Dendritic cell treated with granulocyte-macrophage colony-stimulating factor and Interleukin-4, amounts not matched to agents 40 ng/mL and 50 ng/mL, for 4 days (primary cell): ENCODE measurements at regions of chr7 and their contacts with region 1.

Region 1: GRCh38 chr7:135509903-135510602 is at the start of gene CNOT4:
- H3K4me3 Mint-ChIP-seq: no peak within 1 kb of the TSS
- H3K27ac Mint-ChIP-seq: no peak within 1 kb of the TSS
- H3K4me1 Mint-ChIP-seq: peaks cover 4% of the 10 kb centered on the region
- H3K27me3 Mint-ChIP-seq: no peaks in the 10 kb centered on the region

Region 2: GRCh38 chr7:135281363-135281949 is 228.6 kb before region 1 on chr7:
- intact Hi-C with region 1: loop called (anchors 2 kb)
- H3K4me3 Mint-ChIP-seq: no peak overlapping the region
- H3K27ac Mint-ChIP-seq: no peak overlapping the region
- H3K4me1 Mint-ChIP-seq: peaks cover 7% of the 10 kb centered on the region
- H3K27me3 Mint-ChIP-seq: peaks cover 17% of the 10 kb centered on the region

Region 3: DNA sequence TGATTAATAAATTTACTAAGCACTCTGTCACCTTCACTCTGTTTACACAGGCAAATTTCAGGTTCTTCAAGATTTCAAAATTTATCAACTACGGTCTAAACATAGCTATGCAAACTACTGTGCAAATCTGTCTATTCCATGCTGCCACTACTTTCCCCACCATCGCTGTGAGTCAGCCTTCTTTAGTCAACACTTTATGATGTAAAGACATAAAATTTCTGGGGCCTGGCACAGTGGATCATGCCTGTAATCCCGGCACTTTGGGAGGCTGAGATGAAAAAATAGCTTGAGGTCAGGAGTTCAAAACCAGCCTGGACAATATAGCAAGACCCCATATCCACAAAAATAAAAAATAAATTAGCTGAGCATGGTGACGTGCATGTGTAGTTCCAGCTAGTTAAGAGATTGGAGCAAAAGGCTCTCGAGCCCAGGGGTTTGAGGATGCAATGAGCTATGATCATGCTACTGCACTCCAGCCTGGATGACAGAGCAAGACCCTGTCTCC is 42.8 kb before region 1 on chr7:
- intact Hi-C with region 1: loop called (anchors 5 kb)
- H3K4me3 Mint-ChIP-seq: no peak overlapping the region
- H3K27ac Mint-ChIP-seq: no peak overlapping the region
- H3K4me1 Mint-ChIP-seq: peaks cover 6% of the 10 kb centered on the region
- H3K27me3 Mint-ChIP-seq: no peaks in the 10 kb centered on the region

Region 4: GRCh38 chr7:135558337-135558767 is 48.3 kb after region 1 on chr7:
- intact Hi-C with region 1: loop called (anchors 1 kb)
- H3K4me3 Mint-ChIP-seq: no peak overlapping the region
- H3K27ac Mint-ChIP-seq: no peak overlapping the region
- H3K4me1 Mint-ChIP-seq: peaks cover 29% of the 10 kb centered on the region
- H3K27me3 Mint-ChIP-seq: no peaks in the 10 kb centered on the region

Region 5: DNA sequence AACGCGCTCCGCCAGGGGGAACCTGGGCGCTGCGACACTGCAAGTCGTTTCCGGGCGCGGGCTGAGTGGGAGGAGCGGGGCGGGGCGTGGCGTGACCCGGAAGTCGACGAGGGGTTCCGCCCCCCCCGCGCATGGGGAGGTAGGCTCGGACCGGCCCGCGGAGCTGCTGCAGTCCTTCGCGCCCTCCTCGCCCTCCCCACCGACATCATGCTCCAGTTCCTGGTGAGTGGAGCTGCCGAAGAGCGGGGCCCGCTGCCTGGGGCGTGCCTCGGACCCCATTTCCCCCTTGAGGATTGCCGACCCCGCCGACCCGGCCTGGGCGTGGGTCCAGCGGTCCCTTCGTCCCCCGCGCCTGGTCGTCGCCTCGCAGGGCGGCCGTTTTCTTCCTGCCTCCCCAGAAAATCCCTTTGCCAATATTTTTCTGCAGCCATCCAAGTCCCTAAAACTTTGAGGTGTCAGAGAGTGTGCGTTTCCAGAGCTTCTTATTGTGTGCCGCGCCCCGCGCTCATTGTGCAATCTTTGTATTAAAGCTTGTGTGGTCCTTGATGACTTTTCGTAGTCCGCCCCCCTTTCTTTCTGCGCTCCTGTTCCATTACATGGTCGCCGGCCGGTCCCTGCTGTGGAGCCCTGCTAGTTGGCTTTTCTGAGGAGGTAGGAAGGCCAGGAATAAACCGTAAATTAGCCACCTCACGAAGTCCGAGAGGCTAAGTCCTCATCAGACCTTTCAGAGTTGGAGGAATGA is 152.5 kb after region 1 on chr7 and contains the start of gene STMP1:
- intact Hi-C with region 1: loop called (anchors 1 kb)
- H3K4me3 Mint-ChIP-seq: peak within 1 kb of the TSS; percentile 96
- H3K27ac Mint-ChIP-seq: peak within 1 kb of the TSS; percentile 99
- H3K4me1 Mint-ChIP-seq: peaks cover 44% of the 10 kb centered on the region
- H3K27me3 Mint-ChIP-seq: no peaks in the 10 kb centered on the region

Region 6: DNA sequence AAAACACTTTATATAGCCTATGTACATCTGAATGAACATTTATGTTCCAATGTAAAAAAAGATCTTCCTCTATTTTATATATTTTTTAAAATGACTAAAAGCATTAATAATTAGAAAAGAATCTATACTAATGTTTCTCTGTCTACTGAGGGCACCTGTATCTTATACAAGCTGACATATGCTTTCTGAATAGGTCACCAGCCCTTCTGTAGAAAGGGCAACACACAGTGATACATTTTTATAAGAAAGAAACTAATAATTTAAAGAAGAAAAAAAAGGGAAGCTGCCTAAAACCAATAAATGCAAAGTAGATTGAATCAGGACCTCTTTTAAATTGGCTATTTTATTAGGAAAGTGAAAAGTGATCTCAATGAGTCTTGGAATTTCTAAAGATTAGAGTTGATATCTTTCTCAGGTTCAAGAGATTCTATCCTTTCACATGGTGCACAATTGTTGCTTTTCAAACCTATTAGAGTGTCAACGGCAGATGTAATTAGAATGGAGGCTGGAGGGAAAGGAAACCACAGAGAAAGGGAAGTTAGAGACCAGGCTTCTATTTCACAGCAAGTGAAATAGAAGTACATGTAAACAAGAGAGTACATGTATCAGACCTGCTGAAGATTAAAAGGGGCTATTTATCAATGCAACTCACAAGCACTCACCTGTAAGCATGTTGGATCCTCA is 460.8 kb after region 1 on chr7:
- intact Hi-C with region 1: no loop called
- H3K4me3 Mint-ChIP-seq: peak overlapping the region; percentile 44
- H3K27ac Mint-ChIP-seq: peak overlapping the region; percentile 63
- H3K4me1 Mint-ChIP-seq: peaks cover 72% of the 10 kb centered on the region
- H3K27me3 Mint-ChIP-seq: no peaks in the 10 kb centered on the region